Activated CD4-positive, alpha-beta T cell treated with anti-CD3 and anti-CD28 coated beads for 36 hours (primary cell): ENCODE measurements at regions of chr7 and their contacts with region 1.

Region 1: GRCh38 chr7:43834463-43835251 is 34.7 kb downstream of the MRPS24 start:
- DNase-seq: peak; percentile 62
- ATAC-seq: peak; percentile 80
- H3K4me3 Mint-ChIP-seq: peak overlapping the region; percentile 66
- H3K27ac Mint-ChIP-seq: peak overlapping the region; percentile 93
- H3K4me1 Mint-ChIP-seq: peaks cover 30% of the 10 kb centered on the region
- H3K27me3 Mint-ChIP-seq: no peaks in the 10 kb centered on the region

Region 2: GRCh38 chr7:42940985-42941847 is 893.4 kb before region 1 on chr7:
- CTCF ChIA-PET with region 1: interaction called, 3 read pairs
- POLR2A ChIA-PET with region 1: no interaction called
- intact Hi-C with region 1: loop called (anchors 2 to 10 kb)
- DNase-seq: peak; percentile 90
- ATAC-seq: peak; percentile 23
- H3K4me3 Mint-ChIP-seq: no peak overlapping the region
- H3K27ac Mint-ChIP-seq: no peak overlapping the region
- H3K4me1 Mint-ChIP-seq: peaks cover 42% of the 10 kb centered on the region
- H3K27me3 Mint-ChIP-seq: no peaks in the 10 kb centered on the region

Region 3: DNA sequence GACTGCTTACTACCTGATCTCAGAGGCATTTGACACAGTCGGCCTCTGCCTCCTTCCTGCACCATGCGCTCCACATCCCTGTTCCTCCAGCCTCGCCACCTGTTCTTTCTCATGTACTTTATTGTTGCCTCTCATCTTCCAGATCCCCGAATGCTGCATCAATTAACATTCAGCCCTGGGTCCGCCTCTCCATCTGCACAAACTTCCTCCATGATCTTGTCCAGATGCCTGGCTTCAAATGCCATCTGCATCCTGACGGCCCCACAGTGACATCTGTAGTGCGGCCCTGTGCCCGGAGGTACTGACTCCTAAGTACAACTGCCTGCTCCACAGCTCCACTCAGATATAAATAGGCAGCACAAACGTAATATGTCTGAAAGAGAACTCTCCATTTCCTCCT is 303.0 kb before region 1 on chr7:
- CTCF ChIA-PET with region 1: no interaction called
- POLR2A ChIA-PET with region 1: no interaction called
- intact Hi-C with region 1: no loop called
- DNase-seq: no peak
- ATAC-seq: no peak
- H3K4me3 Mint-ChIP-seq: no peak overlapping the region
- H3K27ac Mint-ChIP-seq: no peak overlapping the region
- H3K4me1 Mint-ChIP-seq: no peaks in the 10 kb centered on the region
- H3K27me3 Mint-ChIP-seq: no peaks in the 10 kb centered on the region

Region 4: GRCh38 chr7:43647673-43648472 is 186.8 kb before region 1 on chr7:
- CTCF ChIA-PET with region 1: interaction called, 3 read pairs
- POLR2A ChIA-PET with region 1: interaction called, 3 read pairs
- intact Hi-C with region 1: loop called in 1 of 2 experiments (anchors 1 kb)
- DNase-seq: peak; percentile 77
- ATAC-seq: peak; percentile 74
- H3K4me3 Mint-ChIP-seq: peak overlapping the region; percentile 66
- H3K27ac Mint-ChIP-seq: peak overlapping the region; percentile 98
- H3K4me1 Mint-ChIP-seq: peaks cover 95% of the 10 kb centered on the region
- H3K27me3 Mint-ChIP-seq: no peaks in the 10 kb centered on the region

Region 5: GRCh38 chr7:43729214-43729923 is 105.3 kb before region 1 on chr7 and contains the start of gene COA1:
- CTCF ChIA-PET with region 1: interaction called, 30 read pairs
- POLR2A ChIA-PET with region 1: no interaction called
- intact Hi-C with region 1: loop called (anchors 1 to 2 kb)
- DNase-seq: peak; percentile 89
- ATAC-seq: peak; percentile 94
- H3K4me3 Mint-ChIP-seq: peak within 1 kb of the TSS; percentile 90
- H3K27ac Mint-ChIP-seq: peak within 1 kb of the TSS; percentile 91
- H3K4me1 Mint-ChIP-seq: peaks cover 36% of the 10 kb centered on the region
- H3K27me3 Mint-ChIP-seq: no peaks in the 10 kb centered on the region
- total RNA-seq, gene COA1: 76.9 to 77.1 TPM

Region 6: GRCh38 chr7:43847496-43847895 is 12.8 kb after region 1 on chr7:
- CTCF ChIA-PET with region 1: interaction called, 19 read pairs
- POLR2A ChIA-PET with region 1: no interaction called
- intact Hi-C with region 1: no loop called
- DNase-seq: no peak
- ATAC-seq: no peak
- H3K4me3 Mint-ChIP-seq: no peak overlapping the region
- H3K27ac Mint-ChIP-seq: no peak overlapping the region
- H3K4me1 Mint-ChIP-seq: no peaks in the 10 kb centered on the region
- H3K27me3 Mint-ChIP-seq: no peaks in the 10 kb centered on the region